CD4-positive, alpha-beta memory T cell (primary cell): ENCODE measurements at regions of chr12 and their contacts with region 1.

Region 1: GRCh38 chr12:25377469-25378177 is 126.9 kb upstream of the KRAS start:
- DNase-seq: peak in 4 of 5 donors; percentile 27 to 54 (median 46)
- H3K4me3 ChIP-seq: no peak overlapping the region
- H3K4me3 Mint-ChIP-seq: peak overlapping the region in 7 of 8 donors; percentile 10 to 67 (median 37)
- H3K27ac ChIP-seq: no peak overlapping the region
- H3K27ac Mint-ChIP-seq: peak overlapping the region; percentile 54 to 93 (median 84)
- H3K4me1 ChIP-seq: peaks cover 29% of the 10 kb centered on the region
- H3K4me1 Mint-ChIP-seq: peaks cover 20 to 35% (median 28%) of the 10 kb centered on the region in 4 donors
- H3K27me3 ChIP-seq: no peaks in the 10 kb centered on the region
- H3K27me3 Mint-ChIP-seq: no peaks in the 10 kb centered on the region

Region 2: GRCh38 chr12:25241167-25242020 is 136.2 kb before region 1 on chr12:
- CTCF ChIA-PET with region 1: interaction called, 22 read pairs
- POLR2A ChIA-PET with region 1: interaction called, 13 read pairs
- intact Hi-C with region 1: no loop called
- DNase-seq: peak; percentile 57 to 67 (median 63)
- H3K4me3 ChIP-seq: no peak overlapping the region
- H3K4me3 Mint-ChIP-seq: no peak overlapping the region
- H3K27ac ChIP-seq: peak overlapping the region; percentile 22
- H3K27ac Mint-ChIP-seq: peak overlapping the region; percentile 4 to 86 (median 66)
- H3K4me1 ChIP-seq: peaks cover 14% of the 10 kb centered on the region
- H3K4me1 Mint-ChIP-seq: peaks cover 13 to 52% (median 31%) of the 10 kb centered on the region in 4 donors
- H3K27me3 ChIP-seq: no peaks in the 10 kb centered on the region
- H3K27me3 Mint-ChIP-seq: no peaks in the 10 kb centered on the region

Region 3: DNA sequence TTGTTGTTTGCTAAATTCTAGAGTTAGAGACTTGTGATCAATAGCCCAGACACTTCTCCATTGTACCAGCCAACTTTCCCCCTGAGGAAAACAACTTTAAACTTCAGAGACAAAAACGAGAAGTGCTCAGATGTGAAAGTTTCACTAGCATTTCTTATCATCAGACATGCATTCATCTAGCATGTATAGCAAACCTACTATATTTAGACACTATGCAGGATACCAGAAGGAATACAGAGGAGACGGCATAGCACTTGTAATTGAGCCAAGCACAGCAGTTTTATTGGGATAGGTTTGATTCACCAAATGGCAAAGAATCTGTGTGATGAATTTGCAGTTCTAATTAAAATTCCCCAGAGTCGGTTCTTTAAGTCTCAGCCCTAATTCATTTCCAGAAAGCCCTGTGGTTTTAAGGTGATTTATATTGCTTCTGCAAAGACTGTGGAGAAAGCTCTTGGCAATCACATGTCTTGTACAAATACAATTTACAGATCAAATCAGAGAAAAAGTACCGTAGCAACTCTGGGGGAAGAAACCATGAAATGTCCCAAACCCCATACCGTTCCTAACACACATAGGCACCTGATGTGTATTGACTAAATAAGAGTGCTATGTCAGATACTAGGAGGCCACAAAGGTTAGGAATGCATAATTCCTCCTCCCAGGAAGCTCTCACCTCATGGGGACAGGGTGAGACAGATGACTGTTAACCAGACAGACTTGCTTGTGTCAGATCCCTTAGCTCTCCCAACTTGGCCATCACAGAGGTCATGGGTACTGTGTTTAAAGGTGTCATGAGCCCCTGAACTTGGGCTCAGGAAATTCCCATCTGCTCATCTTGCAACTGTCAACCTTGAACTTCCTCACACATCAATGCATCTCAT is 57.3 kb before region 1 on chr12:
- CTCF ChIA-PET with region 1: no interaction called
- POLR2A ChIA-PET with region 1: interaction called, 13 read pairs
- intact Hi-C with region 1: loop called (anchors 2 kb)
- DNase-seq: no peak
- H3K4me3 ChIP-seq: no peak overlapping the region
- H3K4me3 Mint-ChIP-seq: no peak overlapping the region
- H3K27ac ChIP-seq: no peak overlapping the region
- H3K27ac Mint-ChIP-seq: peak overlapping the region in 1 of 7 donors; percentile 6
- H3K4me1 ChIP-seq: peaks cover 30% of the 10 kb centered on the region
- H3K4me1 Mint-ChIP-seq: peaks cover 33 to 44% (median 37%) of the 10 kb centered on the region in 4 donors
- H3K27me3 ChIP-seq: no peaks in the 10 kb centered on the region
- H3K27me3 Mint-ChIP-seq: no peaks in the 10 kb centered on the region

Region 4: DNA sequence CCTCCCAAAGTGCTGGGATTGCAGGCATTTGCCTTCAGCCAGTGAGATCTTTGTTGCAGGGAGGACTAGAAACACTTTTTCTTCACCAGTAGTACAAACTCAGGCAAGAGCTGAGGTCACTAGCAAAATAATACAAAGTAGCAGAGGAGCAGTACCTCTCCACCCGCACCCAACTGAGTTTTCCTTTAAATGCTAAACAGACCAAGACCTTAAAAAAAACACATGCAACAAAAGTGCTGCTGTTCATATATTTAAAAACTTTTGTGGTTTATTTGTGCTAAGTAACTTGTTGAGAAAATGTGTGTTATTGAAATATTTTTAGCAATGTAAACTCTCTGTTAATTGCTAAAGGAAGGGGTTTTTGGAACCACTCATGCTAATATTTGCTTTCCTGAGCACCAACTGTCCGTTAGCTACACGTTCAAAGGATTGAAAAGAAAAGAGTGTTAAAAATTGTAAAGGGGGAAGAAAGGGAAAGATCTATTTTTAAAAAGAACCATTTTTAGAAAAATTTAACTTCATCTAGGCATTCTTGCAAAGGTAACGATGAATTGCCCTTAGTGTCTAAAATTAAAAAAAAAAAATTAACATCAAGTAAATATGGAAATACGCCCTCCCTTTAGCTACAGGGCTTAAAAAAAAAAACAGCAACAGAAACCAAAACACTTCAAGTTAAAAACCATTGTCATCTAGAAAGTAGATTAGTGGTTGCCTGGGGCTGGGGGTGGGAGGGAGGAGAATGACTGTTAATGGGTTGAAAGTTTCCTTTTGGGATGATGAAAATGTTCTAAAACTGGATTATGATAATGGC is 12.9 kb before region 1 on chr12:
- CTCF ChIA-PET with region 1: interaction called, 3 read pairs
- POLR2A ChIA-PET with region 1: interaction called, 21 read pairs
- intact Hi-C with region 1: no loop called
- DNase-seq: no peak
- H3K4me3 ChIP-seq: no peak overlapping the region
- H3K4me3 Mint-ChIP-seq: peak overlapping the region in 4 of 8 donors; percentile 15 to 51 (median 40)
- H3K27ac ChIP-seq: no peak overlapping the region
- H3K27ac Mint-ChIP-seq: peak overlapping the region in 2 of 7 donors; percentile 7 to 64
- H3K4me1 ChIP-seq: peaks cover 11% of the 10 kb centered on the region
- H3K4me1 Mint-ChIP-seq: peaks cover 4 to 10% (median 7%) of the 10 kb centered on the region in 4 donors
- H3K27me3 ChIP-seq: no peaks in the 10 kb centered on the region
- H3K27me3 Mint-ChIP-seq: no peaks in the 10 kb centered on the region